Motor neuron (in vitro differentiated cells): ENCODE measurements at regions of chr4 and their contacts with region 1.

Region 1: DNA sequence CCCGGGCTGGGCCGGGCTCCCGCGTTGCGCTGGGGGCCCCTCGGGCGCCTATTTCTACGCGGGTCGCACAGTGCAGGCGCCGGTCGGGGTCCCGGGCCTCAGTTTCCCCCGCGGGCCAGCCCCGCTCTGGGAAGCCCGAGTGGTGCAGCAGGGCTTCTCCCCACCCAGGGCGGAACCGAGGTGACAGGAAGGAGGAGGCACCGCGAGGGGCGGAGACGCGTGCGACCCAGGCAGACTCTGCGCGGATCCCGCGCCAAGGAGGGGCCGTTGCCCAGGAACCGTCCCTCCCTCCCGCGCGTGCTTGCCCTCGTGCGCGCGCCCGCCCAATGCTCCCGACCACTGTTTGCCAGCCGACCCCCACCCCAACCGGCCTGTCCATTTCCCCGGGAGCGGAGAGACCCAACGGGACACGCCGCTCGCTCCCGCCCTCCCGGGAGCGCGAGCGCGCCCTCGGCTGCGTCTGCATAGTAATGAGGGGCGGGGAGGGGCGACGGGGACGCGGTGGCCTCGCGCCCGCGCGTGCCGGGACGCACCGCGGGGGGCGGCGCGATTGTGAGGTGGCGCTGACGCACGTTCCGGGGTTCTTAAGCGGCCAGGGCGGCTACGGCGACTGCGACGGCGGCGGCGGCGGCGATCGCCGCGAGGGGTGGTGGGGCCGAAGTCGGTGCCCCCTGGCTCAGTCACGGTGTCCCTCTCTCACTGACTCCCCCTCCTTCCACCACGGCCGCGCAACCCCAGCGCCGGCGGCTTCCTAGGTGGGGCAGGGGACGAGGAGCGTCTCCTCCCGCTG is at the start of gene CPEB2:
- ATAC-seq: peak; percentile 41 to 80 (median 74)
- H3K4me3 ChIP-seq: peak within 1 kb of the TSS; percentile 61 to 75 (median 70)
- H3K27ac ChIP-seq: peak within 1 kb of the TSS; percentile 94 to 95
- H3K4me1 ChIP-seq: peaks cover 0 to 5% of the 10 kb centered on the region in 2 donors
- total RNA-seq, gene CPEB2: 8.4 to 39.9 (median 14.9) TPM

Region 2: GRCh38 chr4:13627606-13628301 is 1374.3 kb before region 1 on chr4 and contains the start of gene BOD1L1:
- in situ Hi-C with region 1: loop called in 3 of 9 experiments (anchors 25 kb)
- ATAC-seq: peak; percentile 89 to 94 (median 92)
- H3K4me3 ChIP-seq: peak within 1 kb of the TSS; percentile 55 to 96 (median 85)
- H3K27ac ChIP-seq: peak within 1 kb of the TSS; percentile 89 to 95
- H3K4me1 ChIP-seq: peaks cover 12 to 14% of the 10 kb centered on the region in 2 donors
- total RNA-seq, gene BOD1L1: 32.6 to 157 (median 49.6) TPM

Region 3: DNA sequence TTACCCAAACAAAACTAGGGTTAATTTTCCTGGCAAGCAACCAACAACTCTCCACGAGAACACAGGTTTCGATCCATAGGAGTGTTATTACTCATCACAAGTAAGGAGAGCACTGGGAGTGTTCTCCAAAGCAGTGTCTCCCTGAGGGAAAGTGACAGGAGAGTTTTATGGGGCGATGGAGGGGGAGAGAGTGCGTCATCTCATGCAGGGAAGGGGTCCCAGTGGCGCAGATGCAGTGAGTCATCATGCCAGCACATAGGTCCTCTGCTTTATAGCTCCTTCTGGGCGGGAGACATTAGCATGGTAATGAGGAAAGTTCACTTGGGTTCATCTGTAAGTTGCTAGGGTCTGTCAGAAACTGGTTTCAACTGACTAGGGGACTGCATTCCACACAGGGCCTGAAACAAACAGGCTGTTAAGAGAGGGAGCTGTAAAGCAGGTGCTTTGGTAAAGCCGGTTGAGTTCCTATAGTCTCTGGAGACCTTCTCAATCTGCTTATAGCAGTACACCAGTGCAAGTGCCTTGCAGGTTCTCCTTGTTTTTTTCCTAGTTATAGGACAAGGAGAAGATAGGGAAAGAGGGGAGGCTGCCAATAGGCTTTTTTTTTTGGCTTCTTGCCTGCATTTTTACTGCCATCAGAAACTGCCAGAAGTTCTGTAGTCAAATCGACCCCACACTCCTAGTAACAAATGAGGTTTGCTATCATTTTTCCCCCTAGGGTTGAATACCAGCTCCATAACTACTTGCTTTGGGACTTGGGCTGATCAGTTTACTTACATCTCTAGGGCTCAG is 1361.7 kb before region 1 on chr4:
- in situ Hi-C with region 1: loop called in 4 of 9 experiments (anchors 10 to 25 kb)
- ATAC-seq: peak; percentile 81 to 98 (median 96)
- H3K4me3 ChIP-seq: peak overlapping the region in 2 of 5 donors; percentile 5 to 13
- H3K27ac ChIP-seq: peak overlapping the region; percentile 66 to 81
- H3K4me1 ChIP-seq: peaks cover 25 to 32% of the 10 kb centered on the region in 2 donors

Region 4: DNA sequence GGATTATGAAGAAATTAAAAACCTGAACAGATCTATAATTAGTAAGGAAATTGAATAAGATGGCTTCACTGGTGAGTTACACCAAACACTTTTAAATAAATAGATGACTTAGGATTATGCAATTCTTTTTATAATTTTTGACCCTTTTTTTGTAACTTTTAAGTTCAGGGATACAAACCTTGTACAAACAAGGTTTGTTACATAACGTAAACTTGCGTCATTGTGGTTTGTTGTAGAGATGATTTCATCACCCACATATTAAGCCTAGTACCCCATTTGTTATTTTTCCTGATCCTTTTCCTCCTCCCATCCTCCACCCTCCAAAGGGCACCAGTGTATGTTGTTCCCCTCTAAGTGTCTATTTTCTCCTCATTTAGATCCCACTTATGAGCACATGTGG is 75.9 kb after region 1 on chr4:
- in situ Hi-C with region 1: no loop called
- ATAC-seq: no peak
- H3K4me3 ChIP-seq: no peak overlapping the region
- H3K27ac ChIP-seq: no peak overlapping the region
- H3K4me1 ChIP-seq: no peaks in the 10 kb centered on the region

Region 5: GRCh38 chr4:15457406-15458201 is 455.5 kb after region 1 on chr4:
- in situ Hi-C with region 1: loop called in 1 of 9 experiments (anchors 25 kb)
- ATAC-seq: peak in 7 of 8 experiments; percentile 44 to 92 (median 67)
- H3K4me3 ChIP-seq: no peak overlapping the region
- H3K27ac ChIP-seq: no peak overlapping the region
- H3K4me1 ChIP-seq: peaks cover 0 to 3% of the 10 kb centered on the region in 2 donors